Activated naive CD4-positive, alpha-beta T cell treated with anti-CD3 and anti-CD28 coated beads for 36 hours (primary cell): ENCODE measurements at regions of chr6 and their contacts with region 1.

Region 1: GRCh38 chr6:14423955-14424354 is 306.4 kb downstream of the CD83 start:
- DNase-seq: no peak
- H3K4me3 Mint-ChIP-seq: no peak overlapping the region
- H3K27ac Mint-ChIP-seq: peak overlapping the region; percentile 57
- H3K4me1 Mint-ChIP-seq: peaks cover 23% of the 10 kb centered on the region
- H3K27me3 Mint-ChIP-seq: no peaks in the 10 kb centered on the region

Region 2: DNA sequence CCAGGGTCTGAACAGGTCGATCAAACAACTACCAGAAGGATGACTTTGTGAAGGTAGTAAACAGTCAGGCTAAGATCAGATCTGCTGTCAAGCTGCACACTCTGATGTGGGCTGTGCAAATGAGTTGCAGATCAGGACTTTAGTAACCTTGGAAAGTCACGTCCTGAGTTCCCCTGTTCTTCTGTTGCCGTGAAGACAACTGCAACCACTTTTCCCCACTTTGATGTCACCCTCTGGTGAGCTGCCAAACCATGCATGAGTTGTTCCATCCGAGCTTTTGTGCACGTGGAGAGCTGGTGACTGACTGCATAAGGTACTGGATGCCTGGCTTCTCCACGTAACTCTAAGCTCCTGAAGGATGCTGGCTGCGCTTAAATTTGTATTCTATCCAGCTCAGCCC is 195.4 kb before region 1 on chr6:
- CTCF ChIA-PET with region 1: no interaction called
- intact Hi-C with region 1: loop called (anchors 1 kb)
- DNase-seq: peak; percentile 82
- H3K4me3 Mint-ChIP-seq: no peak overlapping the region
- H3K27ac Mint-ChIP-seq: no peak overlapping the region
- H3K4me1 Mint-ChIP-seq: peaks cover 21% of the 10 kb centered on the region
- H3K27me3 Mint-ChIP-seq: no peaks in the 10 kb centered on the region

Region 3: DNA sequence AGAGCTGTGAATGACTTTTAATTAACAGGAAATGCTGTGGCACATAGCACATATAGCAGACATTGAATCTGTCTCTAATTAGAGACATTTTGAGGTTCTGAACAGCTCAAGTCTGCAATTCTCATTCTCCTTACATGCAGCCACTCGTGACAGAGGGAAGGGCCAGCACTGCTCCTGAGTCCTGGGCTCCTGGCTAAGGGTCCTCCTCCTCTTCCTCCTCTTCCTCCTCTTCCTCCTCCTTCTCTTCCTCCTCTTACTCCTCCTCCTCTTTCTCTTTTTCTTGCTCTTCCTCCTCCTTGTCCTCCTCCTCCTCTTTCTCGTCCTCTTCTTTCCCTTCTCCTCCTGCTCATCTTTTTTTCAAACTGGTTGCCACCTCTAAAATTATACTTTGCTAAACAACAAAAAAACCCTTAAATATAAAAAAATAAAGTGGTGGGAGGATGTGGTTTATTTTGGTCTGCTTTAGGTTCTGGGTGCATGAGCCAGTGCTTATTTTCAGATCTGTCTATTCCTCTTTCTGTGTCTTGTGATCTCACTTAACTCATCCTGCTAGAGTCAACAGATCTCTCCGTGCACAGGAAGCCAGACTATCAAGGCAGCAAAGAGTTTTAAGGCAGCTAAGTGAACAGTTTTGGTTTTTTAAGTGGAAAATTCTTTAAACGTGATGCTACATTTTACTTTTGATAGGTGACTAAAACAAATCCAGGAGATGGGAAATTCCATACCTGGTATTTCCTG is 147.1 kb before region 1 on chr6:
- CTCF ChIA-PET with region 1: no interaction called
- intact Hi-C with region 1: loop called (anchors 2 kb)
- DNase-seq: peak; percentile 63
- H3K4me3 Mint-ChIP-seq: peak overlapping the region; percentile 40
- H3K27ac Mint-ChIP-seq: peak overlapping the region; percentile 85
- H3K4me1 Mint-ChIP-seq: peaks cover 37% of the 10 kb centered on the region
- H3K27me3 Mint-ChIP-seq: no peaks in the 10 kb centered on the region

Region 4: GRCh38 chr6:14381829-14382677 is 41.9 kb before region 1 on chr6:
- CTCF ChIA-PET with region 1: no interaction called
- intact Hi-C with region 1: loop called (anchors 1 kb)
- DNase-seq: peak; percentile 54
- H3K4me3 Mint-ChIP-seq: no peak overlapping the region
- H3K27ac Mint-ChIP-seq: peak overlapping the region; percentile 41
- H3K4me1 Mint-ChIP-seq: peaks cover 36% of the 10 kb centered on the region
- H3K27me3 Mint-ChIP-seq: peaks cover 2% of the 10 kb centered on the region

Region 5: GRCh38 chr6:14452567-14453527 is 28.9 kb after region 1 on chr6:
- CTCF ChIA-PET with region 1: interaction called, 3 read pairs
- intact Hi-C with region 1: loop called (anchors 1 kb)
- DNase-seq: peak; percentile 79
- H3K4me3 Mint-ChIP-seq: no peak overlapping the region
- H3K27ac Mint-ChIP-seq: no peak overlapping the region
- H3K4me1 Mint-ChIP-seq: peaks cover 53% of the 10 kb centered on the region
- H3K27me3 Mint-ChIP-seq: peaks cover 1% of the 10 kb centered on the region

Region 6: DNA sequence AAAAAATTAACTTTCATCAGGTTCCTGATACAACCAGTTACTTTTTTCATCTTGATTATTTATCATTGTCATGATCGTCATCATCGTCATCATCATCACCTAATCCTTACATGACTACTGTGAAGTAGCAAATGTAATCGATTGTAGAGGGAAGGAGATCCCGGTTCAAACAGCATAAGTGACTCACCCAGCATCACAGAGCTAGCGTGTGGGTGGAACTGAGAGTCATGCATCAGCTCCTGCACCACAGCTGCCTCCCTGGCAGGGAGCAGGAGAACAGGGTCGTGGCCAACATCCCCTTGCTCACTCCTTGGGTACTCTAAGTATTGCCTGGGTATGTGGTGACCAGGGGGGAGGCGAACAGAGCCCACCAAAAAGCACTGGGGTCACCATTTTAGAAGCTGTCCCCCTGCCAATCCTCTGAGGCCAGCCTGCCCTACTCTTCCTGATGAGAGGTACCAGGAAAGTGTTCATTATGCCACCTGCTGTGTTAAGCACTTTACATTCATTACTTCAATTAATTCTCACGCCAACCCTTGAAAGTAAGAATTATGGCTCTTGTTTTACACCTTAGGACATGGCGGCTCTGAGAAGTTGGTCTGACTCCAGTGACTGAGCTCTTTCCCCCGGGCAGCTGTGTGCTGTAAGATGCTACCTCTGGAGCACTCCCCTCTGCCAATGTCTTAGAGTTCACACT is 118.9 kb after region 1 on chr6:
- CTCF ChIA-PET with region 1: no interaction called
- intact Hi-C with region 1: loop called (anchors 1 kb)
- DNase-seq: peak; percentile 92
- H3K4me3 Mint-ChIP-seq: no peak overlapping the region
- H3K27ac Mint-ChIP-seq: peak overlapping the region; percentile 64
- H3K4me1 Mint-ChIP-seq: peaks cover 24% of the 10 kb centered on the region
- H3K27me3 Mint-ChIP-seq: no peaks in the 10 kb centered on the region

Region 7: DNA sequence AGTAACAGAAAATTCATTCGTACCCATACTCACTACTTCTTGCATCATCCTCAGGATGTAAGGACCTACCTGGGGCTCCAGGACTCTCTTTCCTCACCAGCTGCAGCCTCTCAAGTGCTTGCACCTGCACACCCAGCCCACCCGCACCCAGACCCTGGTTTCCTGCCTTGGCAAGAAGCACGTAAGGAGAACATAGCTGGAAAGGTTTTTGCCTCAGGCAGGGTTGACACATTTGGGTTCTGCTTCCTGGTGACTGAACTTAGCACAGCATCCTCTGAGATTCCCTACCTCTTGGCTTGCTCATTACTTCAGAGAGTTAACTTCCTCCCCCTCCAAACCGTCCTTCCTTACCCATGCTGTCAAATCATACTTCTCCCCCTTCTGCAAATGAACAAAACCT is 250.5 kb after region 1 on chr6:
- CTCF ChIA-PET with region 1: no interaction called
- intact Hi-C with region 1: loop called (anchors 1 kb)
- DNase-seq: peak; percentile 12
- H3K4me3 Mint-ChIP-seq: no peak overlapping the region
- H3K27ac Mint-ChIP-seq: peak overlapping the region; percentile 80
- H3K4me1 Mint-ChIP-seq: peaks cover 19% of the 10 kb centered on the region
- H3K27me3 Mint-ChIP-seq: no peaks in the 10 kb centered on the region

Region 8: DNA sequence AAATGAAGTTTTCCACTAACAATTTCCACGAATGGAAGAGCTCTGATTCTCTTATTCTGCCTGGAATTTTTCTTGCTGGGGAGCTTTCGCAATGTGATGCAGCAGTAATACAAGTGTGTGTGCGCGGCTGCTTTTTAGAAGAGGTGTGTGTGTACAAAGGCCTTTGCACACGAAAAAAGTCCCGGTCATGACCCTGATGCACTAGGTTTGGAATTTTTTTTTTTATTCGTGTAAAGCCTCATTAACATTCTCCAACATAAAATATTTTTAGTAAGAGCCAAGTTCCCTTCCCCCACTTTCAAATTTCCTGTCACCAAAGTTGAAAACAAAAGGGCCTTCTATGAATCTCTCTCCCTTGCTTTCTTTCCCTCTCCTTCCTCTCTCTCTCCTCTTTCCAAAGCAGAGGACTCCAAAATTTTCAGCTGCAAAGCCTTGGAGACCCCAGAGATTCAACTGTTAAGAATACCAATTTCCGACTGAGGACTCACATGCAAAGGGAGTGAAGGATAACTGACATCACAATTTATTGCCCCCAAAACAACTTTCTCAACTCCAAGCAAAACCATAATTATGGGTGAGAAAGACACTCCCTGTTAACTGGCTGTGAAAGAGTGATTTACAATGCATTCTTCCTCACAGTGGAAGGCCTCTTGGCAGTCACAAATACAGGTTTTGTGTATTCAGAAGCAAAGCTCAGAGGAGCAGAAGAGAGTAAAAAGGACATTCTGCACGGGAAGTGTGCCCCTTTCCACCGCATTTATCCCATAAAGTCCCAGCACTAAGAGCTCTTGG is 400.7 kb after region 1 on chr6:
- CTCF ChIA-PET with region 1: no interaction called
- intact Hi-C with region 1: no loop called
- DNase-seq: no peak
- H3K4me3 Mint-ChIP-seq: no peak overlapping the region
- H3K27ac Mint-ChIP-seq: no peak overlapping the region
- H3K4me1 Mint-ChIP-seq: peaks cover 14% of the 10 kb centered on the region
- H3K27me3 Mint-ChIP-seq: no peaks in the 10 kb centered on the region